ENCODE measurements at regions of chr17 and their contacts with region 1.

Region 1: GRCh38 chr17:64129764-64130558 is at the start of gene ERN1:
- DNase-seq: peak; percentile 92
- ATAC-seq: peak; percentile 92
- H3K4me3 Mint-ChIP-seq: peak within 1 kb of the TSS; percentile 82
- H3K27ac Mint-ChIP-seq: peak within 1 kb of the TSS; percentile 89
- H3K4me1 Mint-ChIP-seq: peaks cover 41% of the 10 kb centered on the region
- H3K27me3 Mint-ChIP-seq: no peaks in the 10 kb centered on the region
- total RNA-seq, gene ERN1: 21.7 to 22.9 TPM

Region 2: GRCh38 chr17:63919311-63919723 is 210.6 kb before region 1 on chr17:
- CTCF ChIA-PET with region 1: interaction called, 79 read pairs
- DNase-seq: peak; percentile 81
- ATAC-seq: peak; percentile 96
- H3K4me3 Mint-ChIP-seq: no peak overlapping the region
- H3K27ac Mint-ChIP-seq: no peak overlapping the region
- H3K4me1 Mint-ChIP-seq: peaks cover 5% of the 10 kb centered on the region
- H3K27me3 Mint-ChIP-seq: peaks cover 11% of the 10 kb centered on the region

Region 3: GRCh38 chr17:63984651-63985386 is 145.1 kb before region 1 on chr17:
- CTCF ChIA-PET with region 1: interaction called, 14 read pairs
- DNase-seq: peak; percentile 67
- ATAC-seq: peak; percentile 83
- H3K4me3 Mint-ChIP-seq: no peak overlapping the region
- H3K27ac Mint-ChIP-seq: peak overlapping the region; percentile 72
- H3K4me1 Mint-ChIP-seq: peaks cover 15% of the 10 kb centered on the region
- H3K27me3 Mint-ChIP-seq: no peaks in the 10 kb centered on the region

Region 4: GRCh38 chr17:64025732-64026294 is 104.1 kb before region 1 on chr17:
- CTCF ChIA-PET with region 1: interaction called, 488 read pairs
- DNase-seq: peak; percentile 97
- ATAC-seq: peak; percentile 87
- H3K4me3 Mint-ChIP-seq: peak overlapping the region; percentile 65
- H3K27ac Mint-ChIP-seq: peak overlapping the region; percentile 92
- H3K4me1 Mint-ChIP-seq: peaks cover 60% of the 10 kb centered on the region
- H3K27me3 Mint-ChIP-seq: no peaks in the 10 kb centered on the region

Region 5: GRCh38 chr17:64063766-64064224 is 66.2 kb before region 1 on chr17:
- CTCF ChIA-PET with region 1: interaction called, 87 read pairs
- DNase-seq: peak; percentile 54
- ATAC-seq: peak; percentile 54
- H3K4me3 Mint-ChIP-seq: no peak overlapping the region
- H3K27ac Mint-ChIP-seq: no peak overlapping the region
- H3K4me1 Mint-ChIP-seq: peaks cover 28% of the 10 kb centered on the region
- H3K27me3 Mint-ChIP-seq: no peaks in the 10 kb centered on the region

Region 6: GRCh38 chr17:64117981-64118979 is 11.7 kb before region 1 on chr17:
- CTCF ChIA-PET with region 1: interaction called, 20 read pairs
- DNase-seq: no peak
- ATAC-seq: no peak
- H3K4me3 Mint-ChIP-seq: no peak overlapping the region
- H3K27ac Mint-ChIP-seq: no peak overlapping the region
- H3K4me1 Mint-ChIP-seq: peaks cover 54% of the 10 kb centered on the region
- H3K27me3 Mint-ChIP-seq: no peaks in the 10 kb centered on the region

Measured in activated CD8-positive, alpha-beta memory T cell treated with anti-CD3 and anti-CD28 coated beads, Interleukin-2, amount 10 ng/mL, durations not matched to agents 7 days and 5 days (primary cell).